Caco-2 (cell line): ENCODE measurements at regions of chr1 and their contacts with region 1.

Region 1: DNA sequence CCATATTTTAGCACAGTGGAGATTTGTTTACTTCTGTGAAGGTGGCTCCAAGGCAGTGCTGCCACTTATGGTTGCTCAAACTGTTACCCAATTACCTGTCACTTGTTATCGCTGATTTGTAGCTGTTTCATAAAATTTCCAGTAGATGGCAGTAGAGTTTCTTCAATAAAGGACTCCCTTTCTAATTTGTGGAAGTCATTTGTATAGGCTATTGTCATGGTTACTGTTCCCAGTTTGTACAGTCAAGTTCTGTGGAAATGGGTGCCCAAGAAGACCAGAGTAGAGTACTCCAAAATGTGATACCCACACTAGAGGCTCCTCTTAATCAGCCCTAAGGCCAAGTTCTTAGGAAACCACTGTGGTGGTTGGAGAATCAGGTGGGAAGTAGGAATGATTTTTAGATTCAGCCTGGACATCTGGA is 186.1 kb downstream of the CLEC20A start:
- DNase-seq: peak in 1 of 2 experiments; percentile 68
- H3K4me3 ChIP-seq: no peak overlapping the region
- H3K4me3 Mint-ChIP-seq: no peak overlapping the region
- H3K27ac Mint-ChIP-seq: peak overlapping the region; percentile 79
- H3K4me1 ChIP-seq: no peaks in the 10 kb centered on the region
- H3K4me1 Mint-ChIP-seq: peaks cover 28% of the 10 kb centered on the region
- H3K27me3 ChIP-seq: no peaks in the 10 kb centered on the region
- H3K27me3 Mint-ChIP-seq: no peaks in the 10 kb centered on the region
- CTCF ChIP-seq: peak; percentile 67 to 75

Region 2: GRCh38 chr1:178300352-178300699 is 10.4 kb before region 1 on chr1:
- CTCF ChIA-PET with region 1: interaction called, 15 read pairs
- POLR2A ChIA-PET with region 1: no interaction called
- intact Hi-C with region 1: no loop called
- DNase-seq: no peak
- H3K4me3 ChIP-seq: no peak overlapping the region
- H3K4me3 Mint-ChIP-seq: no peak overlapping the region
- H3K27ac Mint-ChIP-seq: no peak overlapping the region
- H3K4me1 ChIP-seq: no peaks in the 10 kb centered on the region
- H3K4me1 Mint-ChIP-seq: peaks cover 15% of the 10 kb centered on the region
- H3K27me3 ChIP-seq: no peaks in the 10 kb centered on the region
- H3K27me3 Mint-ChIP-seq: no peaks in the 10 kb centered on the region
- CTCF ChIP-seq: no peak

Region 3: DNA sequence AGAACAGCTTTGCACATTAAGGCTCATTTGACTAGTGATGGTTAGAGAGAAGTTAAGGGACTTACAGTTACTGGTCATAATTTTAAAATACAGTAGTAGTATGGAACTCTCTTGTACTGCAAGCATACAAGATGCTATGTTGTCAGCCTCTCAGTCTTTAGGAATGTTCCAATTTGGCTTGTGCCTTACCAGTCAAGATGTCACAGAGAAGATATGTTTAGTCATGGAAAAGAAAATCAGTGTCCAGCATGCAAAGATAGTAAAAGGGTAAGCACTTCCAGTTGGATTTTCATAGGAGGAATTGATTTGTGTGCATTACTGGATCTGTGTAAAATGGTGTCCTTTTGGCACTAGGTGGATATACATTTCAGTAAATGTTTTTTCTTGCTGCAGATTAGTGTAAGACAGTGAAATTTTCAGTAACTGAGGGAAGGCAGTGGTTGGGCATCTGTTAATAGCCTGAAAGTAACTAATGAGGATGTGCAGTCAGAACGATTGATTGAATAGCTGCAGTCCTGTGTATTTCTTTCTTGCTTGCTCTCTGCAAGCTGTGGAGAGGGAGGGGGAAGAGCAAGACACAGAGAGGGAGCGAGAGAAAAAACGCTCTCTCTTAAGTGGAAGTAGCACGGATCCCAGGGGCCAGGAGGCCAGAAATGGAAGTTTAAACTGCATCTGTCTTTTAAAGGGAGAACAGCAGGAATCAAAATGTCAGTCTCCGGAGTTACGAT is 77.9 kb after region 1 on chr1:
- CTCF ChIA-PET with region 1: no interaction called
- POLR2A ChIA-PET with region 1: no interaction called
- intact Hi-C with region 1: loop called (anchors 5 kb)
- DNase-seq: no peak
- H3K4me3 ChIP-seq: no peak overlapping the region
- H3K4me3 Mint-ChIP-seq: no peak overlapping the region
- H3K27ac Mint-ChIP-seq: no peak overlapping the region
- H3K4me1 ChIP-seq: peaks cover 16% of the 10 kb centered on the region
- H3K4me1 Mint-ChIP-seq: peaks cover 17% of the 10 kb centered on the region
- H3K27me3 ChIP-seq: no peaks in the 10 kb centered on the region
- H3K27me3 Mint-ChIP-seq: no peaks in the 10 kb centered on the region
- CTCF ChIP-seq: no peak

Region 4: GRCh38 chr1:178470411-178470960 is 159.8 kb after region 1 on chr1:
- CTCF ChIA-PET with region 1: interaction called, 3 read pairs
- POLR2A ChIA-PET with region 1: no interaction called
- intact Hi-C with region 1: loop called (anchors 5 kb)
- DNase-seq: peak; percentile 84 to 92
- H3K4me3 ChIP-seq: no peak overlapping the region
- H3K4me3 Mint-ChIP-seq: peak overlapping the region; percentile 18
- H3K27ac Mint-ChIP-seq: peak overlapping the region; percentile 86
- H3K4me1 ChIP-seq: peaks cover 26% of the 10 kb centered on the region
- H3K4me1 Mint-ChIP-seq: peaks cover 5% of the 10 kb centered on the region
- H3K27me3 ChIP-seq: no peaks in the 10 kb centered on the region
- H3K27me3 Mint-ChIP-seq: no peaks in the 10 kb centered on the region
- CTCF ChIP-seq: no peak

Region 5: GRCh38 chr1:178532392-178532791 is 221.7 kb after region 1 on chr1:
- CTCF ChIA-PET with region 1: interaction called, 11 read pairs
- POLR2A ChIA-PET with region 1: no interaction called
- intact Hi-C with region 1: loop called (anchors 2 kb)
- DNase-seq: peak; percentile 85 to 87
- H3K4me3 ChIP-seq: no peak overlapping the region
- H3K4me3 Mint-ChIP-seq: no peak overlapping the region
- H3K27ac Mint-ChIP-seq: no peak overlapping the region
- H3K4me1 ChIP-seq: peaks cover 37% of the 10 kb centered on the region
- H3K4me1 Mint-ChIP-seq: peaks cover 27% of the 10 kb centered on the region
- H3K27me3 ChIP-seq: no peaks in the 10 kb centered on the region
- H3K27me3 Mint-ChIP-seq: no peaks in the 10 kb centered on the region
- CTCF ChIP-seq: peak; percentile 91 to 93